ENCODE measurements at regions of chr11 and their contacts with region 1.

Region 1: GRCh38 chr11:69925366-69926196 is 106.4 kb upstream of the FGF3 start:
- DNase-seq: peak; percentile 68
- H3K4me3 ChIP-seq: no peak overlapping the region
- H3K27ac ChIP-seq: peak overlapping the region in 1 of 2 experiments; percentile 45; a peak in 2 of 4 replicates
- H3K4me1 ChIP-seq: peaks cover 0 to 17% of the 10 kb centered on the region in 2 experiments; a peak in 1 of 4 replicates
- H3K27me3 ChIP-seq: no peaks in the 10 kb centered on the region; the same call in 1 of the 2 replicates
- CTCF ChIP-seq: no peak
- EP300 ChIP-seq: no peak
- RAD21 ChIP-seq: no peak

Region 2: DNA sequence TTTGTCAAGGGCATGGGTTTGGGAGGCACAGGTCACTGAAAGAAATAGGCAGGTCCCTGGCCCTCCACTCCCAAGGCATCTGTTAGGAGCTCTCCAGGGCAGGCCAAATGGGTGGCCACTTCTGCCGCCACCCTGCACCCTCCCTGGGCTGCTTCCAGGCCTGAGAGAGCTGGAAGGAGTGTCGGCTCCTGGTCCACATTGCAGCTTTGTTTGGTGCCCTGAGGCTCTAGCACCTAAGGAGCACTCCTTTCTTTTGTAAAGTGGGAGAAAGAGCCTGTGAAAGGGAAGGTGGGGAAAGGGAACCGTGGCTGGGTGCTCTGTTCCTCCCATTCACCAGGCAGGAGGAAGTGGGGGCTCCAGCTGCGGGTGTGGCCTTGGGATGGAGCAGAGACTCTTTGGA is 138.1 kb before region 1 on chr11:
- CTCF ChIA-PET with region 1: no interaction called
- POLR2A ChIA-PET with region 1: no interaction called
- DNase-seq: no peak
- H3K4me3 ChIP-seq: no peak overlapping the region
- H3K27ac ChIP-seq: no peak overlapping the region
- H3K4me1 ChIP-seq: no peaks in the 10 kb centered on the region; a peak in 1 of 4 replicates
- H3K27me3 ChIP-seq: no peaks in the 10 kb centered on the region; the same call in 1 of the 2 replicates
- CTCF ChIP-seq: no peak
- EP300 ChIP-seq: no peak
- RAD21 ChIP-seq: no peak

Region 3: DNA sequence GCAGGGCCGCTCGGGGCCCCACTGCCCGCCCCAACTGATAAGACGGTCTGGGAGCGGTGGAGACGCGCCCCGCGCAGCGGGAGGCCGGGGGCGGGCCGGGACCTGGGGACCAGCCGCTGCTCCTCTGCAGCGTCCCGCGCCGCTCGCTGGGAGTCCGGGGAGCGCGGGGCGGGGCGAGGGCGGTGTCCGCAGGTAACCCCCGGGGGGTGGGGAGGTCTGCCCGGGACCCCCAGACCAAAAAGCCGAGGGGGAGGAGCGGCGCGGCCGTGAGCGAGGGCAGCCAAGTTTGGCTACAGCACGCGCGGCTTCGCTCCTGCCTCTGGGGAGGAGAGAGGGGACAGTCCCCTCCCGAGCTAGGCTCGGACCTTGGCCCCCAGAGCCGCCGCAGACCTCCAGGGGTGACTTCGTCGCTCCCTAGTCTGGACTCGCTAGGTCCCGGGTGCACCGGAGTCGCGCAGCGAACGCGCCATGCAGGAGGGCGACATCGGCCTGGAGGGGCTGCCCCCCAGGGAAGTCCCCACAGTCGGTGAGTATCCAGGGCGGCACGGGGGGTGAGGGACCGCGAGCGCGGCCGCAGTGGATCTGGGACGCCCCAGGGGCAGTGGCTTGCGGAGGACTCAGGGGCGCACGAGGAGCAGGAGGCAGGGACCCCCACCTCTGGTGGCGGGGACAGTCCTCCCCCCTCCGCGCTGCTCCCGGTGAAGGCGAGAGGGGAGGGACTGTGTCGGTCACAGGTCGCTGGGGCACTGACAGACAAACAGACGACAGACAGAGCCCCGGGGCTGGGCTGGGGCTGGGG is 60.3 kb after region 1 on chr11:
- CTCF ChIA-PET with region 1: no interaction called
- POLR2A ChIA-PET with region 1: no interaction called
- DNase-seq: peak; percentile 68
- H3K4me3 ChIP-seq: peak overlapping the region in 1 of 2 experiments; percentile 21; a peak in 1 of 4 replicates
- H3K27ac ChIP-seq: no peak overlapping the region
- H3K4me1 ChIP-seq: no peaks in the 10 kb centered on the region; a peak in 1 of 4 replicates
- H3K27me3 ChIP-seq: peaks cover 30% of the 10 kb centered on the region
- CTCF ChIP-seq: no peak
- EP300 ChIP-seq: no peak
- RAD21 ChIP-seq: no peak

Region 4: DNA sequence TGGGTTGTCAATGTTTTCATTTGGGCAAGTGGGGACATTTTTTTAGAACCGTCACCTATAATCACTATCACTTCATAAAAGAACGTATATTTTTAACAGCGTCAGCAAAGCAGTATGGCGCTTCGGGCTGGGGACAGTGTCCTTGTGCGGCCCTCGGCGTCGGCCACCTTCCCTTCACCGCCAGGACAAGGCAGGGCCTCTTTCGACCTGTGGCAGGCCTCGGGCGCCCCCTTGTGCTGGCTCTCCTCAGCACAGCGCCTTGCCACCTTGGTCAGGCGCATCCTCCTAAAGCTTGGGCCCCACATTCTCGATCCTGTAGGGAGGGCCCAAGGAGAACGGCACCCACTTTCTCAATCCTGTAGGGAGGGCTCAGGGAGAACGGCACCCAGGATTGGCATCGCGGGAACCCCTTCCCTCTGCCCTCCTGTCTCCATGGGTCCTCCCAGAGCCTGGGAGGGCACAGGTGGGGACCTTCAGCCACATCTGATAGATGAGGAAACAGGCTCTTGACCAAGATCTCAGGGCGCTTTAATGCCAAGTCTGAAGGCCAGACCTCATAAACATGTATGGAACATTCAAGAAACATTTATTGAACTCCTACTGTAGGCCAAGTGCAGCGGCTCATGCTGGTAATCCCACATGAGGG is 266.0 kb after region 1 on chr11:
- CTCF ChIA-PET with region 1: interaction called, 105 read pairs
- POLR2A ChIA-PET with region 1: no interaction called
- DNase-seq: peak; percentile 88
- H3K4me3 ChIP-seq: no peak overlapping the region; a peak in 1 of 4 replicates
- H3K27ac ChIP-seq: no peak overlapping the region
- H3K4me1 ChIP-seq: no peaks in the 10 kb centered on the region
- H3K27me3 ChIP-seq: peaks cover 14% of the 10 kb centered on the region
- CTCF ChIP-seq: peak; percentile 70
- EP300 ChIP-seq: no peak
- RAD21 ChIP-seq: peak; percentile 92

Region 5: DNA sequence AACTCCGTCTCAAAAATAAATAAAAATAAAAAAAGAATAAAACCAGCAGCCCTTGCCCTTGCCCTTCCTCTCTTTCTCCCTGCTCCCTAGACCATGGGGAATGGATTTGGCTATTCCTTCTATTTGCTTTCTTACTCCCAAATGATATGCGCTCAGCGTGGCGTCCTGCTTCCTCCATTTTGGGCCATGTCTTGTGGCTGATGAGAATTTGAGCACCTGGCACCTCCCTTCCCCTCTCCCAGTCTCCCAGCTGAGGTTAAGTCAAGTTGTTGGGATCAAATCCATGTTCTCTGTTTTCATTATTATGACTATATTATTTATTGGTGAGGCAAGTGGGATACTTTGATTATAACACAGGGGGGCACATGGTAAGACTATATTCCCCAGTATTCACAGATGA is 462.0 kb after region 1 on chr11:
- CTCF ChIA-PET with region 1: no interaction called
- POLR2A ChIA-PET with region 1: no interaction called
- DNase-seq: no peak
- H3K4me3 ChIP-seq: no peak overlapping the region
- H3K27ac ChIP-seq: no peak overlapping the region
- H3K4me1 ChIP-seq: peaks cover under 1 to 15% of the 10 kb centered on the region in 2 experiments; a peak in 1 of 4 replicates
- H3K27me3 ChIP-seq: no peaks in the 10 kb centered on the region
- CTCF ChIP-seq: no peak
- EP300 ChIP-seq: no peak
- RAD21 ChIP-seq: no peak